AG04450 (cell line): ENCODE measurements at regions of chr14 and their contacts with region 1.

Region 1: DNA sequence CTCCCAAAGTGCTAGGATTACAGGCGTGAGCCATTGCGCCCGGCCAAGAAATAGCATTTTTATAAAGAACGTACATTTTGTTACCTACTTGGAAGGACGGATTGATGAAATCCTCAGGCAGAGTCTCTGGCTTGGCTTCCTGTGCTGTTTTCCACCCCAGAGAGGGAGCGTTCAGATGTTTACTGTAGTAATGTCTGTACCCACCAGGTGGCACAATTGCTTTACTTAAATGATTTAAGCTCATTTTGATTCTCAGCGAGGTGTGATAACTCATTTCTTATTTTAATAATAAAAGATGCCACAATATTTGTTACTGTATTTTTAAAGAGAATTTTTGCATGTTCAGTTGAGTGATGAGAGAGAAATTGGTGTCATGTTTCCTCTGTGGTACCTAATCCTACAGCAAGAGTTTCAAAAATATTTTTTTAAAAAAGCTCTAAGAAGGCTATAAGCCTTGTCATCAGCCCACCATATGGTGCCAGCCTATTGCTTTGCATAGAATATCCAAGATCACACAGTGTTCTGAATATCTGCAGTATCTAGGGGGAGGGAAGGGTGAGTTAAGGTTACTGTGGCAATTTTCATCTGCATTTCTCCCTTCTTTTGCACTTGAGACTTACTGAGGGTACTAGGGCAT is 82.6 kb upstream of the TRAF3 start:
- DNase-seq: peak; percentile 20
- H3K4me3 ChIP-seq: no peak overlapping the region
- H3K27ac ChIP-seq: no peak overlapping the region
- H3K27me3 ChIP-seq: no peaks in the 10 kb centered on the region
- CTCF ChIP-seq: peak; percentile 64

Region 2: DNA sequence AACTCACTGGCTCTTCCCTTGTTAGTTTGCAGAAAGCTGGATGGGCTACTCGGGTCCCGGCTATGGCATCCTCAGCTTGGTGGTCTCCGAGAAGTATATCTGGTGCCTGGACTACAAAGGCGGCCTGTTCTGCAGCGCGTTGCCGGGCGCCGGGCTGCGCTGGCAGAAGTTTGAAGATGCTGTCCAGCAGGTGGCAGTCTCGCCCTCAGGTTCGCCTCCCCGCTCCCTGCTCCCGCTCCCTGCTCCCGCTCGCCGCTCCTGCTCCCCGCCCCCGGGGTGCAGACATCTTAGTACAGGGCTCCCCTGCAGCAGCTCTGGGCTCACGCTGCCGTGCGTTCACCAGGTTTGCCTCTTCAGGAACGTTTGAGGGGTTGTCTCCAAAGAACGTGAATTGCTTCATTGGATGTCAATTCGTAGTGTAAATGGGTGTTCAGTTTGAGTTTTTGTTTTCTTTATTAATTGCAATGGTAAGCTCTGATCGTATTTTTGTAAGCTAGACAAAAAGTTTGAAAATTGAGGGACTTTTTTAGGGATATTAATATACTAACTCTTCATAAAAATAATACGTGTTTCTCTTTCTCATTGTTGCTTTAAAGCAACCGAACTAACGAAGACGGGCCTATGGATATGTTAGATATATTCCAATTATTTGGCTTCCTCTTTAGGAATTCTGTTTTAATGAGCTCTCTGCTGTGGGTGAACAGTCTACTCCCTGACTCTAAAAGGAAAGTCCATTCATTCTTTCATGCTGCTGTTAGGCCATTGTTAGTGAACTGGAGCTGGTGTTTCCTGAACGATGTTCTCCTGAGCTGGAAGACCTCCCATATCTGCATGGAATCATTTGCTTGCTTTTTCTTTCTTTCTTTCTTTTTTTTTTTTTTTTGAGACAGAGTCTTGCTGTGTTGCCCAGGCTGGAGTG is 256.4 kb before region 1 on chr14:
- CTCF ChIA-PET with region 1: interaction called, 14 read pairs
- POLR2A ChIA-PET with region 1: no interaction called
- DNase-seq: peak; percentile 48
- H3K4me3 ChIP-seq: peak overlapping the region; percentile 29; the same call in 1 of the 2 replicates
- H3K27ac ChIP-seq: no peak overlapping the region
- H3K27me3 ChIP-seq: no peaks in the 10 kb centered on the region
- CTCF ChIP-seq: peak; percentile 75

Region 3: GRCh38 chr14:102591889-102592763 is 102.5 kb before region 1 on chr14 and contains the start of gene RCOR1:
- CTCF ChIA-PET with region 1: interaction called, 18 read pairs
- POLR2A ChIA-PET with region 1: no interaction called
- DNase-seq: peak; percentile 94
- H3K4me3 ChIP-seq: peak within 1 kb of the TSS; percentile 81
- H3K27ac ChIP-seq: peak within 1 kb of the TSS; percentile 98
- H3K27me3 ChIP-seq: no peaks in the 10 kb centered on the region
- CTCF ChIP-seq: no peak
- polyA plus RNA-seq, gene RCOR1: 14.4 and 16.7 TPM in 2 replicates

Region 4: DNA sequence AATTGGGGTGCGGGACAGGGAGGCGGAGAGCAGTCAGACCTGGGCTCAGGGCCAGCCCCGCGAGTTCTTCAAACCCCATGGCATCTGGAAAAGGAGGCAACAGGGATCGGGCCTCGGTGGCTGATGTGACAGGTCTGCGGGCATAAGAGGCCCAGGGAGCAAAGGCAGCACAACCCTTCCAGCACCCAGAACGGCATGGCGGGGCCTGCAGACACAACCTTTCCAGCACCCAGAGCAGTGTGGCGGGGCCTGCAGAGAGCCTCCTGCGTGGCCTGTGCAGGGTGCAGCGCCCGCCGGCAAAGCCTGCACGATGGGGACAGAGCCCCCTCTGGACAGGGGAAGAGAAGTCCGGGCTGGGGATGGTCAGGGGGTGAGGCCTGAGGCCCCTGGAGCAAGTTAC is 56.4 kb after region 1 on chr14:
- CTCF ChIA-PET with region 1: no interaction called
- POLR2A ChIA-PET with region 1: no interaction called
- DNase-seq: no peak
- H3K4me3 ChIP-seq: no peak overlapping the region
- H3K27ac ChIP-seq: no peak overlapping the region
- H3K27me3 ChIP-seq: no peaks in the 10 kb centered on the region
- CTCF ChIP-seq: no peak

Region 5: DNA sequence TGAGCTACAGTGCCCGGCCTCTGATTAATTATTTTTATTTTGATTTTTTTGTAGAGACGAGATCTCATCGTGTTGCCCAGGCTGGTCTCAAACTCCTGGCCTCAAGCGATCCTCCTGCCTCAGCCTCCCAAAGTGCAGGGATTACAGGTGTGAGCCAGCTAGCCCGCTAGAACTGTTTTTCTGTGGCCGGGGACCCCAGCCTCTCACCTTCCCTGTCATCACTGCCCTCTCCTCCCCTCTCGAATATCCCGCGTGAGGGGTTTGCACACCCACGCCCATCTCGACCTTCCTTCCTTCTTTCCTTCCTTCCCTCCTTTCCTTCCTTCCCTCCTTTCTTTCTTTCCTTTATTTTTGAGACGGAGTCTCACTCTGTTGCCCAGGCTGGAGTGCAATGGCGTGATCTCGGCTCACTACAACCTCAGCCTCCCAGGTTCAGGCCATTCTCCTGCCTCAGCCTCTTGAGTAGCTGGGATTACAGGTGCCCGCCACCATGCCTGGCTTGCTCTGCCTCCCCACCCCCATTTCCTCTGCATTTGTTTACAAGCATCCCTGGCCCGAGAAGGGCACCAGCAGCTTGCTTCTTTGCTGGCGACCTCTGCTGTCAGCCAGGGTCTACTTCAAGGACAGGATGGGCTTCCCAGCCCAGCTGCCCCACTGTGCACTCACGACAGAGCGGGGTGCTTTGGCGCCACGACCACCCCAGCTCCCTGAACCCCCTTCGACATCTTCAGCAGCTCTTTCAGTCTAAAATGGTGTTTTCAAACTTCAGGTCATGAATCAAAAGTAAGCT is 78.3 kb after region 1 on chr14:
- CTCF ChIA-PET with region 1: interaction called, 15 read pairs
- POLR2A ChIA-PET with region 1: no interaction called
- DNase-seq: no peak
- H3K4me3 ChIP-seq: no peak overlapping the region
- H3K27ac ChIP-seq: no peak overlapping the region
- H3K27me3 ChIP-seq: peaks cover 11% of the 10 kb centered on the region
- CTCF ChIP-seq: peak; percentile 25; the same call in 1 of the 2 replicates

Region 6: DNA sequence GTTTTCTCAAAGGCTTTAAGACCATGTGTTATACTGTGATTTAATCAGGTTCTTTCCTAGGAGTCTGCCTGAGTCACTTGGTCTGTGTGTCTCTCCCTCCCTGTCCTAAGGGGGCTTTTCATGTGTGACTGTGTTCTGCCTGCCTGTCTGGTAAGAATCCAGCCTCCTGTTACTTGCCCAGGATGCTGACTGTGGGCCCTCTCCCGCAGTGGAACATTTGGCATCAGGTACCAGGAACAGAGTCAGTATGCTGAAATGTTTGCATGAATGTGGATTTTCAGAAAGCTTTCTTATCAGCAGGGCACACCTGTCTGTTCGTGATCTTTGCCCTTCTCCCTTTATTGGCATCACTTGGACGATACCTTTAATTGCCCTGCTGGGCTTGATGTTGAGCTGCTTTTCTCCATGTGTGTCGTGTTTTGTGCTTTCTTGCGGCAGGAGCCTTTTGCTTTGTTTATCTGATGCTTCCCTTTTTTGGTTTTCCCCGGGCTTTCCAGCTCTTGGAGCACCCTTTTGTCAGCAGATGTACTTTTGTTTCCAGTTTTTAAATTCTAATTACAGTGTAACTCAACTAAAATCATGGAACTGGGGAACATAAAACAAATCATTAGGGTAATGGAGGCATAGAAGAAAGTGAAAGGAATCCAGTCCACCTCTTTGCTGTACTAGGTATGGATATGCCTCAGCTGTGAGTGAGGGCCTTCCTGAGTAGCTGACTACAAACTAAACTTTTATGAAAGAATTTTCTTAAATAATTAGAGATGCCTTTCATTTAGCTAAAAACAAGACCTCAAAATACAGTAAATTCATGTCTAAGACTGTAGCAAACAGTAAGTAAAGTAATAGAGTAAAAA is 155.1 kb after region 1 on chr14:
- CTCF ChIA-PET with region 1: no interaction called
- POLR2A ChIA-PET with region 1: no interaction called
- DNase-seq: no peak
- H3K4me3 ChIP-seq: peak overlapping the region; percentile 27
- H3K27ac ChIP-seq: peak overlapping the region; percentile 59
- H3K27me3 ChIP-seq: no peaks in the 10 kb centered on the region
- CTCF ChIP-seq: no peak

Region 7: DNA sequence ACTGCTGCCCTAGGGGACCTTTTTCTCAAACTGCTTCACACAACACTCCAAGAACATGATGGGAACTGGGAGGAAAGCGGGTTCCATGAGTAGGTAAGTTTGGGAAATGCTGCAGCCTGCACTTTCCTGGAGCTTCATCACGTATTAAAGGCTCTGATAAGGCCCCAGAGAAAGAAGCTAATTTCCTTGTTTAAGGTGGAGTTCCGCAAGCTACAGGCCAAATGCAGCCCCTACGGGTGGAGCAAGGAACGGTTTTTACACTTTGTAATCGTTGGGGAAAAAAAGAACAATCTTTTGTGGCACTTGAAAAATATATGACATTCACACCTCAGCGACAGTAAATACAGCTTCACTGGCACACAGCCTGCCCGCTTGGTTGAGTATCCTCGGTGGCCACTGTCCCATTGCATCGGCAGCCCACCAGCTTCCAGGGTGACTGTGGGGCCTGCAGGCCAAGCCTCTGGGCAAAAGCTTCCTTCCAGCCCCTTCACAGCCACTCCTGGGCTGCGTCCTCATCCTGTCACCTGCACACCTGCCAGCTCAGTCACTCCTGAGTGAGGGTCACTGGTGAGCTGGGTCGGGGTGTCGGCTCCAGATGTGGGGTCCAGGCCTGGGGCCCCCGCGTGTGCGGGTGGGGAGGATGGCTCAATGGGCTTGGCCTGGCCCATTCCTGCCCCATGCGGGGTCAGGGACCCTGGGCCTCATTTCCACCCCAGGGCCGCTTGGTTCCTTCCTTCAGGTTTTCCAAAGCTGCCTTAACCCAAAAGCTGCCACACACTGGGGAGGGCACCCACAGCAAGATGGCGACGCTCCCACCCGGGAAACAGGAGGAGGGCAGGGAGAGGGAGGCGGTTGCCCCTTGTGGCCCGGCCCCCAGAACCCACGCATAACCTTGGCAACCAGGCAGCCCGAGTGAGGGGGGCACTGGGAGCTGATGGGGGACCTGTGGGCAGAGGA is 230.3 kb after region 1 on chr14:
- CTCF ChIA-PET with region 1: interaction called, 13 read pairs
- POLR2A ChIA-PET with region 1: no interaction called
- DNase-seq: no peak
- H3K4me3 ChIP-seq: no peak overlapping the region
- H3K27ac ChIP-seq: no peak overlapping the region
- H3K27me3 ChIP-seq: peaks cover 69% of the 10 kb centered on the region
- CTCF ChIP-seq: peak; percentile 38